GM12878 (cell line): ENCODE measurements at regions of chr2 and their contacts with region 1.

Region 1: GRCh38 chr2:55175254-55176025 is 56.7 kb downstream of the CLHC1 start:
- DNase-seq: no peak
- ATAC-seq: peak; percentile 86
- H3K4me3 ChIP-seq: no peak overlapping the region
- H3K27ac ChIP-seq: no peak overlapping the region
- H3K4me1 ChIP-seq: no peaks in the 10 kb centered on the region
- H3K27me3 ChIP-seq: no peaks in the 10 kb centered on the region
- CTCF ChIP-seq: peak; percentile 39 to 68 (median 56); a peak in 4 of 6 replicates
- EP300 ChIP-seq: no peak
- POLR2A ChIP-seq: no peak
- RAD21 ChIP-seq: peak; percentile 82

Region 2: GRCh38 chr2:54763636-54764291 is 411.7 kb before region 1 on chr2:
- CTCF ChIA-PET with region 1: interaction called, 19 read pairs
- POLR2A ChIA-PET with region 1: interaction called, 5 read pairs
- RAD21 ChIA-PET with region 1: interaction called, 8 read pairs
- SMC1A ChIA-PET with region 1: interaction called, 5 read pairs
- in situ Hi-C with region 1: no loop called
- intact Hi-C with region 1: loop called (anchors 2 kb)
- DNase-seq: no peak
- ATAC-seq: peak; percentile 83
- H3K4me3 ChIP-seq: no peak overlapping the region
- H3K27ac ChIP-seq: no peak overlapping the region
- H3K4me1 ChIP-seq: peaks cover 1% of the 10 kb centered on the region
- H3K27me3 ChIP-seq: no peaks in the 10 kb centered on the region; a peak in 2 of 4 replicates
- CTCF ChIP-seq: peak; percentile 50 to 71 (median 61)
- EP300 ChIP-seq: no peak
- POLR2A ChIP-seq: no peak
- RAD21 ChIP-seq: peak; percentile 49

Region 3: DNA sequence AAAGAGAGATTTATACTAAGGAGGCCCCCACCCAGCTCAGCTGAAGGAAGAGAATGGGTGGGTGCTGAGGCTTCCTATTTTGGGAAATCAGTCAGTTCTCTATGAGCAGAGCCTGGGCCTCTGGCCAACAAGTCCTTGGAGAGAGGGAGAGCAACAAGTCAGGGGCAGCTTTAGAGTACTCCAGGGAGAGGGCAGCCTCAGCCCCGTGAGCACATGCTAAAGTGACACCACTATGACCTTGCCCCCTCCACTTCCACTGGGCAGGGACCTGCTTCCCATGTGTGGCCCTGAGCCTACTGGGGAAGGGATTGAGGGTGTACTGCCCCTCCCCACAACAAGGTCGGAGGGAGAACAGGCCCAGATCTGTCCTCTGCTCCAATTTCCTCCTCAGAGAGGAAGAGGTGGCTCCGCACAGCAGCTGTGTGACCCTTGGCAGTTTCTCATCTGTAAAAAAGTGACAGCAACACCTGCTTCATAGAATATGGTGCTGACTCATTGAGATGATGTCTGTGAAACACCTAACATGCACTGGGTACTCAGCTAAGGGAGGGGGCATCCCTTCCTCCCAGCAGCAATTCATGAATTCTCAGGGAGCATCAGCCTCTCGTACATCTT is 16.3 kb before region 1 on chr2:
- CTCF ChIA-PET with region 1: interaction called, 24 read pairs
- POLR2A ChIA-PET with region 1: no interaction called
- RAD21 ChIA-PET with region 1: interaction called, 6 read pairs
- SMC1A ChIA-PET with region 1: interaction called, 25 read pairs
- in situ Hi-C with region 1: no loop called
- intact Hi-C with region 1: no loop called
- DNase-seq: no peak
- ATAC-seq: peak; percentile 71
- H3K4me3 ChIP-seq: no peak overlapping the region
- H3K27ac ChIP-seq: peak overlapping the region; percentile 29; the same call in 1 of the 2 replicates
- H3K4me1 ChIP-seq: peaks cover 10% of the 10 kb centered on the region
- H3K27me3 ChIP-seq: no peaks in the 10 kb centered on the region
- CTCF ChIP-seq: no peak
- EP300 ChIP-seq: no peak
- POLR2A ChIP-seq: no peak
- RAD21 ChIP-seq: no peak